ENCODE measurements at regions of chr6 and their contacts with region 1.

Region 1: GRCh38 chr6:10404107-10404798 is 10.6 kb downstream of the TFAP2A start:
- ATAC-seq: peak; percentile 87 to 94 (median 94)
- H3K4me3 ChIP-seq: peak overlapping the region; percentile 36 to 47 (median 45)
- H3K27ac ChIP-seq: peak overlapping the region; percentile 24 to 77
- H3K4me1 ChIP-seq: peaks cover 9 to 10% of the 10 kb centered on the region in 2 donors

Region 2: GRCh38 chr6:9225441-9225871 is 1178.8 kb before region 1 on chr6:
- in situ Hi-C with region 1: loop called in 1 of 9 experiments (anchors 25 kb)
- ATAC-seq: peak in 1 of 8 experiments; percentile 43
- H3K4me3 ChIP-seq: no peak overlapping the region
- H3K27ac ChIP-seq: no peak overlapping the region
- H3K4me1 ChIP-seq: no peaks in the 10 kb centered on the region

Region 3: DNA sequence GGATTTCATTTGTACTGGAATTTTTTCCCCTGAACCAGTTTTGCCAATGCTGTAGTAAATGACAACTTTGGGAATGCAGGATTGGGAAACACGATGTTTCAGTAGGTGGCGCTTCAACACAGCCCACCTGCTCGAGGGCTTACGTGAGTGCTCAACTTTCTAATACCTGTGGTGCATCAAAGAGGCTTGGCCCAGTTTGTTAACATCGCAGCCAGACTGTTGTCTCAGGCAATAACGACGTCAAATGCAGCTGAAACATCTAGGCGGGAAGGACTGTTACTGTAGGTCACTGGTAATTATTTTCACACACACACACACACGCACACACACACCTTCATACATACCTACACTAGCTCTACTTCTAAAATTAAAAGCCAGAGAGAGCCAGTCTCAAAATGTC is 1153.4 kb before region 1 on chr6:
- in situ Hi-C with region 1: loop called in 2 of 9 experiments (anchors 25 kb)
- ATAC-seq: peak; percentile 30 to 73 (median 61)
- H3K4me3 ChIP-seq: no peak overlapping the region
- H3K27ac ChIP-seq: no peak overlapping the region
- H3K4me1 ChIP-seq: no peaks in the 10 kb centered on the region

Region 4: GRCh38 chr6:9540534-9541126 is 863.6 kb before region 1 on chr6:
- in situ Hi-C with region 1: loop called in 3 of 9 experiments (anchors 25 kb)
- ATAC-seq: peak in 3 of 8 experiments; percentile 48 to 61 (median 56)
- H3K4me3 ChIP-seq: no peak overlapping the region
- H3K27ac ChIP-seq: no peak overlapping the region
- H3K4me1 ChIP-seq: no peaks in the 10 kb centered on the region

Region 5: GRCh38 chr6:10633216-10633615 is 229.0 kb after region 1 on chr6:
- in situ Hi-C with region 1: no loop called
- ATAC-seq: peak in 1 of 8 experiments; percentile 53
- H3K4me3 ChIP-seq: no peak overlapping the region
- H3K27ac ChIP-seq: no peak overlapping the region
- H3K4me1 ChIP-seq: no peaks in the 10 kb centered on the region